Left colon (tissue), 2 donors: ENCODE measurements at regions of chr1 and their contacts with region 1.

Region 1: DNA sequence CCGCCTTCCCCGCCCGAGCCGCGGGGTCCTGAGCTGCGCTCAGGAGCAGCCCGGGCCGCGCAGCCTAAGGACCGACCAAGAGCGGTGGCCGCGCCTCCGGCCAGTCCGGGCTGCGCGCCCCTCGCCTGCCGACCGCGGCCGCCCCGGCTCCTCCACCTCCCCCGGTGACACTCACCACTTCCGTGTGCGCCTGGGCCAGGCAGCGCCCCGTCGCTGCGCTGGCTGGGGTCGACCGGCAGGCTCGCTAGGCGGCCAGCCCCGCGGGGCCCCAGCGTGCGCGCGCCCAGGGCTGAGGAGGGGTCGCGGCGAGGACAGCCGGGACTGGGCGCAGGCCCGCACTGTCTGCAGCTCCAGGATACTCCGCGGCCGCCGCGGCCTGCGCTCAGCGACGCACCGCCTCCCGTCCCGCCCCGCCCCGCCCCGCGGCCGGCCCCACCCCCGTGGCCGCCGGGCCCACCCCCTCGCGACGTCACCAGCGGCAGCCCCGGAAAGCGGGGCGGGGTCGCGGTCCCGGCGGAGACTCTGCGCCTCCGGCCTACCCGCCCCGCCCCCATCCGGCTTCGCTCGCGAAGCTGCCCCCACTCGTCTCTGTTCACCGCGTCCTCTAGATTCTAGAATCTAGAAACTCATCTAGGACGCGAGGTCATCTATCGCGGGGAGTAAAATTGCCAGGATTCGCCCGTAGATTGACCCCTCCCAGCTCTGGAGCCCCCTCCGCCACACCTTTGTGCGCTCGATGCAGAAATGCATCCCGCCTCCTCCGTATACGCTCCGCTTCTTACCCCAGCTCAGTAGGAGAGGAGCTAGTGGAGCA is at the start of gene JAK1:
- DNase-seq: peak; percentile 87 to 94
- ATAC-seq: peak; percentile 91
- total RNA-seq, gene JAK1: 84.3 to 117 TPM

Region 2: GRCh38 chr1:64856553-64856952 is 109.8 kb before region 1 on chr1:
- intact Hi-C with region 1: loop called in 1 of 2 experiments (anchors 10 kb)
- DNase-seq: peak in 1 of 2 donors; percentile 68
- ATAC-seq: peak; percentile 64

Region 3: DNA sequence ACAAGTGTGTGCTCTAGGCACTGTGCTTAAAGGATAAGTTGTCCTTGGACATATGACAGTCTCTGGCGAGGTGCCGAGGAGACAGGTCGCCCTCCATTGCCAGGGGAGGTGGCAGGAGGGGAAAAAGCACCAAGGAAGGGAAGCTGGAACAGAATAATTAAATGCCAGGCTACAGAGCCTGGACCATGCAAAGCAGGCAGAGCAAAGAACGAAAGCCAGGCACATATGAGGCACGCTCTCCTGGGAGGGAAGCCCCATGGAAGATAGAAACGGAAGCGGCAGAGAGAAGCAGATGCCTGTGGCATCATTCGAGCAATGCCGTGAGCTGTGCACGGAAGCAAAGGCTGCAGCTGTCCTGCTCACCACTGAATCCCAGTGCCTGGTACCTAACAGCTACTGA is 91.3 kb before region 1 on chr1:
- intact Hi-C with region 1: no loop called
- DNase-seq: no peak
- ATAC-seq: no peak